AG04450 (cell line): ENCODE measurements at regions of chr16 and their contacts with region 1.

Region 1: GRCh38 chr16:87636072-87636684 is 33.9 kb downstream of the JPH3 start:
- DNase-seq: peak; percentile 26
- H3K4me3 ChIP-seq: no peak overlapping the region
- H3K27ac ChIP-seq: no peak overlapping the region
- H3K27me3 ChIP-seq: peaks cover 45% of the 10 kb centered on the region
- CTCF ChIP-seq: peak; percentile 70

Region 2: GRCh38 chr16:87387942-87388817 is 248.0 kb before region 1 on chr16:
- CTCF ChIA-PET with region 1: interaction called, 27 read pairs
- POLR2A ChIA-PET with region 1: no interaction called
- DNase-seq: peak; percentile 96
- H3K4me3 ChIP-seq: no peak overlapping the region
- H3K27ac ChIP-seq: peak overlapping the region; percentile 94
- H3K27me3 ChIP-seq: no peaks in the 10 kb centered on the region
- CTCF ChIP-seq: no peak

Region 3: DNA sequence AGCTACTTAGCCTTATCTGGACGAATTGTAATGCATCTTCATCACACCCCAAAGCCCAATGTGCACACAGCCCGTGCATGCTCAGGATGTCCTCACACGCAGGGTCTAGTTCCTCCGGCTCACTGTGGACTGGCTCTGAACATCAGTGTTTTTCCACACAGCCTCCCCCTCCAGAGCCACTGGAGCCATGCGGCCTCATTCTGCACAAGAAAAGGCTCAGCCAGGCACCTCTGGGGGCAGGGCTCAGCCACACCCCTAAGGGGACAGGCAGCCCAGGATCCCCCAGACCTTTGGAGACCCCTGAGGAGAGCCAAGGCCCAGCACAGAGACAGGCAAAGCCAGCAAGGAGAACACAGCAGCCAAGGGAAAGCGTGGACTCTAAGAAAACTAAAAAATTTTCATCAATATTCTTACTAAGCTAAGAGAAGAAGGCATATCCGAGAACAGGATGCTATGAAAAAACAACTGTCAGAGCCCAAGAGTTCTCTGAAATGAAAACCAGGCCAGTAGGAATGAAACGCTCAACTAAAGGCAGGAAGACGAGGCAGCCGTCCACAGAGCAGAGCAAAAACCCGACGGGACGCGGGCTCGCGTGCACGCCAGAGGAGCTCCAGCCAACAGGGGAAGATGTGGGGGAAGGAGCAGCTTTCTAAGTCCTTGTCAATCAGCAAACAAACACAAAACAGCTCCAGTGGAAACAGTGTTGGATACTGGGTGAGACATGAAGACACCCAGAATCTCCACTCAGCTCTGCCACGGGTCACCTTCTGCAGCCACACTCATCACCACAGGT is 209.6 kb before region 1 on chr16:
- CTCF ChIA-PET with region 1: interaction called, 11 read pairs
- POLR2A ChIA-PET with region 1: interaction called, 3 read pairs
- DNase-seq: no peak
- H3K4me3 ChIP-seq: no peak overlapping the region
- H3K27ac ChIP-seq: no peak overlapping the region
- H3K27me3 ChIP-seq: no peaks in the 10 kb centered on the region
- CTCF ChIP-seq: no peak

Region 4: GRCh38 chr16:87571136-87571867 is 64.9 kb before region 1 on chr16:
- CTCF ChIA-PET with region 1: interaction called, 10 read pairs
- POLR2A ChIA-PET with region 1: no interaction called
- DNase-seq: no peak
- H3K4me3 ChIP-seq: no peak overlapping the region
- H3K27ac ChIP-seq: no peak overlapping the region
- H3K27me3 ChIP-seq: peaks cover 16% of the 10 kb centered on the region
- CTCF ChIP-seq: peak; percentile 62

Region 5: GRCh38 chr16:87647431-87648185 is 11.4 kb after region 1 on chr16:
- CTCF ChIA-PET with region 1: interaction called, 10 read pairs
- POLR2A ChIA-PET with region 1: no interaction called
- DNase-seq: no peak
- H3K4me3 ChIP-seq: no peak overlapping the region
- H3K27ac ChIP-seq: no peak overlapping the region
- H3K27me3 ChIP-seq: peaks cover 48% of the 10 kb centered on the region
- CTCF ChIP-seq: no peak